GM12878 (cell line): ENCODE measurements at regions of chr2 and their contacts with region 1.

Region 1: DNA sequence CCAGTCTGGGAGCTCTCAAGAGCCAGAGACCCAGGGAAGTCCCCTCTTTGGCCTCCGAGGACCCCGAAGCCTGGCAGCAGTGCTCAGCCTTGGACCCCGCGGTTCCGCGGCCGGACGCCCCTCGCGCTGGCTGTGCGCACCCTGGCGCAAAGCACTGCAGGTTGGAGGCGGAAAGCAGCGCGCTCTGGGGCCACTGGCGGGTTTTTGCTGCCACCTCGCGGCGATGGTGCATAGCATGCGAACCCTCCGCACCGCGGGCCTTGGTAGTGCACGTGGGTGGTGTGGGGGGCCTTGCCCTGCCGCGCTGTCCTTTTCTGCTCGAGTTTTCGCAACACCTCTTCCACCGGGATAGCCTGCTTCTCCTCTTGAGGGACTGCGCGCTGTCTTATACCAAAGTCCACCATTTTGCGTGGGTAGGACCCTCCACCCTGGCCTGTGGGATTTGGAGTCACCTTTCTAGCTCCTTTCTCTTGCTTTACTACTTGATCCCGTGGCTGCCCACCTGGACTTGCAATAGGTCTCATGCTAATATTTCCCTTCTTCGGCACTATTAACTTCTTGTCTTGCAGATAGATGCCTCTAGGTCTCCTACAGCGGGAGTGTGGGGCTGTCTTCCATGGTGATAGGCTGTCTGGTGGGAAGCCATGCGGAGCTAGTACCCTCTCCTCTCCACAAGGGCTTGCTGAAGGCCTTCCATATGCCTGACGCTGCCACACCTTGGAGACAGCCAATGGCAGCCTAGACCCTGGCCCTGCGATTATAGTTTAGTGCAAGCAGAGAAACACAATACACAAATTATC is 14.3 kb downstream of the SIX3 start:
- DNase-seq: no peak
- ATAC-seq: peak; percentile 91
- H3K4me3 ChIP-seq: peak overlapping the region; percentile 57; the same call in 1 of the 2 replicates
- H3K27ac ChIP-seq: no peak overlapping the region
- H3K4me1 ChIP-seq: no peaks in the 10 kb centered on the region; the same call in 1 of the 2 replicates
- H3K27me3 ChIP-seq: peaks cover 6 to 24% of the 10 kb centered on the region in 2 experiments
- CTCF ChIP-seq: peak; percentile 80 to 99 (median 92)
- EP300 ChIP-seq: no peak
- POLR2A ChIP-seq: no peak
- RAD21 ChIP-seq: peak; percentile 91

Region 2: GRCh38 chr2:44244129-44244871 is 711.5 kb before region 1 on chr2:
- CTCF ChIA-PET with region 1: interaction called, 21 read pairs
- POLR2A ChIA-PET with region 1: no interaction called
- RAD21 ChIA-PET with region 1: interaction called, 7 read pairs
- SMC1A ChIA-PET with region 1: interaction called, 9 read pairs
- in situ Hi-C with region 1: loop called (anchors 10 kb)
- intact Hi-C with region 1: loop called (anchors 2 kb)
- DNase-seq: no peak
- ATAC-seq: peak; percentile 85
- H3K4me3 ChIP-seq: no peak overlapping the region
- H3K27ac ChIP-seq: no peak overlapping the region
- H3K4me1 ChIP-seq: no peaks in the 10 kb centered on the region
- H3K27me3 ChIP-seq: no peaks in the 10 kb centered on the region
- CTCF ChIP-seq: peak; percentile 33 to 45 (median 41); a peak in 4 of 6 replicates
- EP300 ChIP-seq: no peak
- POLR2A ChIP-seq: no peak
- RAD21 ChIP-seq: peak; percentile 77

Region 3: GRCh38 chr2:44490726-44491125 is 465.1 kb before region 1 on chr2:
- CTCF ChIA-PET with region 1: interaction called, 10 read pairs
- POLR2A ChIA-PET with region 1: no interaction called
- RAD21 ChIA-PET with region 1: interaction called, 6 read pairs
- SMC1A ChIA-PET with region 1: interaction called, 3 read pairs
- in situ Hi-C with region 1: no loop called
- intact Hi-C with region 1: no loop called
- DNase-seq: no peak
- ATAC-seq: no peak
- H3K4me3 ChIP-seq: no peak overlapping the region
- H3K27ac ChIP-seq: no peak overlapping the region
- H3K4me1 ChIP-seq: no peaks in the 10 kb centered on the region
- H3K27me3 ChIP-seq: no peaks in the 10 kb centered on the region
- CTCF ChIP-seq: no peak
- EP300 ChIP-seq: no peak
- POLR2A ChIP-seq: no peak
- RAD21 ChIP-seq: no peak

Region 4: DNA sequence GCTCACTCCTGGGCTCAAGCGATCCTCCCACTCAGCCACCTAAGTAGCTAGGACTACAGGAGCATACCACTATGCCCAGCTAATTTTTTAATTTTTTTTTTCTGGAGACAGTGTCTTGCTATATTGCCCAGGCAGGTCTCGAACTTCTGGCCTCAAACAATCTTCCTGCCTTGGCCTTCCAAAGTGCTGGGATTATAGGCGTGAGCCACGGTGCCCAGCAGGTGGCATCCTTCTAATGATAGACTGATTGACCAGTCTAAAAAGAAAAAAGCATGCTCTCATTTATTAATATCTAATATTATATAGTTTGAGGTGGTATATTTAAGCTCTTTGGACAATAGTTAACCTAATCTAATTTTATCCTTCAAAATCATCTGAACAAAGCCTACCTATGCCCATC is 395.4 kb before region 1 on chr2:
- CTCF ChIA-PET with region 1: interaction called, 88 read pairs
- POLR2A ChIA-PET with region 1: no interaction called
- RAD21 ChIA-PET with region 1: interaction called, 56 read pairs
- SMC1A ChIA-PET with region 1: interaction called, 42 read pairs
- in situ Hi-C with region 1: loop called (anchors 10 kb)
- intact Hi-C with region 1: loop called (anchors 5 kb)
- DNase-seq: no peak
- ATAC-seq: peak; percentile 57
- H3K4me3 ChIP-seq: no peak overlapping the region
- H3K27ac ChIP-seq: no peak overlapping the region
- H3K4me1 ChIP-seq: no peaks in the 10 kb centered on the region
- H3K27me3 ChIP-seq: no peaks in the 10 kb centered on the region
- CTCF ChIP-seq: peak; percentile 29 to 40 (median 36); a peak in 5 of 6 replicates
- EP300 ChIP-seq: no peak
- POLR2A ChIP-seq: no peak
- RAD21 ChIP-seq: peak; percentile 48

Region 5: GRCh38 chr2:44674473-44675284 is 281.1 kb before region 1 on chr2:
- CTCF ChIA-PET with region 1: interaction called, 76 read pairs
- POLR2A ChIA-PET with region 1: no interaction called
- RAD21 ChIA-PET with region 1: interaction called, 16 read pairs
- SMC1A ChIA-PET with region 1: interaction called, 28 read pairs
- in situ Hi-C with region 1: no loop called
- intact Hi-C with region 1: no loop called
- DNase-seq: no peak
- ATAC-seq: peak; percentile 46; the same call in 2 of the 3 replicates
- H3K4me3 ChIP-seq: no peak overlapping the region
- H3K27ac ChIP-seq: no peak overlapping the region
- H3K4me1 ChIP-seq: no peaks in the 10 kb centered on the region
- H3K27me3 ChIP-seq: no peaks in the 10 kb centered on the region
- CTCF ChIP-seq: no peak
- EP300 ChIP-seq: no peak
- POLR2A ChIP-seq: no peak
- RAD21 ChIP-seq: no peak

Region 6: DNA sequence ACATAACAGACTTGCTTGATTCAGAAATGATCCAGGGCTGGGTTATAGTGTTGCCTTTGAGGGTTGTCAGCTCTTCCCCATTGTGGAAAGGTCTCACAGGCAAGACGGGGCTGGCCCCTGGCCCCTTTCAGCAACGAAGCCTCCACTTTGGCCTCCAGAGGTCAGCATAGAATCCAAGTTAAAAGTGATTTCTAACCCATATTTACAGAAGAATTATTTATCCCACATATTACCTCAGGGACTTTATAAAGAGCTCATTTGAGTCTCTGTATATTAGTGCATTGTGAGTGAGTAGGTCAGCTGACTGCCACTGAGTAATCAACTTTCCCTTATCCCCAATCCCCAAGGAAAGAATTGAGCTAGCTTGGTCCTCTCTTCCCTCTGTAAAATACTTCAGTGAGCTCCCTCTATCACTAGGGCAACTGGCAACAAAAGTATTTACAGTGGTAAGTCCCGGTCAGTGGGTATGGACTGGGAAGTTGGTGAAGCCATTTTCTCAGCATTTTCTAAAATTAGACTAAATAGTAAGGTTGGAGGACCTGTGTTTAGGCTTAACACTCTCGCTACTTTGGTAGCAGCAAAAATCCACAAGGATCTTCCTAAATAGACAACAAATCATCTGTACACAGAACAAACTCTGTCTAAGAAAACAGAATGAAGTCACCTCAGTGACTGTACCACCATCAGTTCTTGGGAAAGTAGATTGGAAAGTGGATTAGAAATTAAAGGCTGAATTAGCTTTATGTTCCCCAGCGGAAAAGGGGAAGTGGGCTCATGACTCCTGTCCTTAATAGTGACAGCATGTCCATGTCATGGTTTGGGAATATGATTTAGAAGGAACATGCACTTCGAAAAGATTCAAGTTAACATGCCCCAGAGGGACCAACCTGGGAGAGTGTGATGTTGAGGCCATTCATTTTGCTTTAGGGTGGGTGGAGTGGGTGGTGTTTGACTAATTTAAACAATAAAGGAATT is 185.3 kb before region 1 on chr2:
- CTCF ChIA-PET with region 1: interaction called, 48 read pairs
- POLR2A ChIA-PET with region 1: no interaction called
- RAD21 ChIA-PET with region 1: interaction called, 25 read pairs
- SMC1A ChIA-PET with region 1: interaction called, 41 read pairs
- in situ Hi-C with region 1: no loop called
- intact Hi-C with region 1: no loop called
- DNase-seq: no peak
- ATAC-seq: peak; percentile 36
- H3K4me3 ChIP-seq: no peak overlapping the region
- H3K27ac ChIP-seq: no peak overlapping the region
- H3K4me1 ChIP-seq: no peaks in the 10 kb centered on the region
- H3K27me3 ChIP-seq: no peaks in the 10 kb centered on the region
- CTCF ChIP-seq: peak in 1 of 3 experiments; percentile 3; a peak in 1 of 6 replicates
- EP300 ChIP-seq: no peak
- POLR2A ChIP-seq: no peak
- RAD21 ChIP-seq: no peak

Region 7: DNA sequence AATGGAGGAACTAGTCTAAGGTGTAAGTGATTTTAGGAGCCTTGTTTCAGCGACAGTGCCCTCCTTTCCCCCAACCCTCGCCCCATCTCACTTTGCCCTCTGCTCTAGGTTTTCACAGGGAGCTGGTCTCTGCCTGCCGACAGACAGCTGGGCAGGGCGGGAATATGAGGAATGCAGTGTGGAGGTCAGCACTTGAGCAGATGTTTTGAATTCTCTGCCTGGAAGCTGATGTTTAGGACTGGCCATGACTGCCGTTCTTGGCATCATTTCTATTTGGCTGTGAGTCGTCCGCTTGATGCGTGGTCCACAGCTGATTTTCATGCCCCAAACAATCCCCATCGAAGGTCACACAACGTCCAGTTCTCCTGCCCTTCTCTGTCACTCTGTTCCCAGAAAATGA is 69.4 kb before region 1 on chr2:
- CTCF ChIA-PET with region 1: no interaction called
- POLR2A ChIA-PET with region 1: no interaction called
- RAD21 ChIA-PET with region 1: no interaction called
- SMC1A ChIA-PET with region 1: no interaction called
- in situ Hi-C with region 1: no loop called
- intact Hi-C with region 1: no loop called
- DNase-seq: no peak
- ATAC-seq: no peak
- H3K4me3 ChIP-seq: no peak overlapping the region
- H3K27ac ChIP-seq: no peak overlapping the region
- H3K4me1 ChIP-seq: no peaks in the 10 kb centered on the region
- H3K27me3 ChIP-seq: no peaks in the 10 kb centered on the region; a peak in 1 of 4 replicates
- CTCF ChIP-seq: no peak
- EP300 ChIP-seq: no peak
- POLR2A ChIP-seq: no peak
- RAD21 ChIP-seq: no peak

Region 8: GRCh38 chr2:45009303-45009927 is 53.6 kb after region 1 on chr2 and contains the start of gene SIX2:
- CTCF ChIA-PET with region 1: no interaction called
- POLR2A ChIA-PET with region 1: no interaction called
- RAD21 ChIA-PET with region 1: no interaction called
- SMC1A ChIA-PET with region 1: no interaction called
- in situ Hi-C with region 1: no loop called
- intact Hi-C with region 1: no loop called
- DNase-seq: no peak
- ATAC-seq: no peak
- H3K4me3 ChIP-seq: no peak within 1 kb of the TSS
- H3K27ac ChIP-seq: no peak within 1 kb of the TSS
- H3K4me1 ChIP-seq: no peaks in the 10 kb centered on the region
- H3K27me3 ChIP-seq: peaks cover 33 to 49% of the 10 kb centered on the region in 2 experiments
- CTCF ChIP-seq: no peak
- EP300 ChIP-seq: no peak
- POLR2A ChIP-seq: no peak
- RAD21 ChIP-seq: no peak
- polyA plus RNA-seq, gene SIX2: not detected

Region 9: GRCh38 chr2:45028268-45028667 is 72.5 kb after region 1 on chr2:
- CTCF ChIA-PET with region 1: no interaction called
- POLR2A ChIA-PET with region 1: no interaction called
- RAD21 ChIA-PET with region 1: no interaction called
- SMC1A ChIA-PET with region 1: no interaction called
- in situ Hi-C with region 1: no loop called
- intact Hi-C with region 1: no loop called
- DNase-seq: no peak
- ATAC-seq: no peak
- H3K4me3 ChIP-seq: no peak overlapping the region
- H3K27ac ChIP-seq: no peak overlapping the region
- H3K4me1 ChIP-seq: no peaks in the 10 kb centered on the region
- H3K27me3 ChIP-seq: no peaks in the 10 kb centered on the region; a peak in 2 of 4 replicates
- CTCF ChIP-seq: no peak
- EP300 ChIP-seq: no peak
- POLR2A ChIP-seq: no peak
- RAD21 ChIP-seq: no peak

Region 10: DNA sequence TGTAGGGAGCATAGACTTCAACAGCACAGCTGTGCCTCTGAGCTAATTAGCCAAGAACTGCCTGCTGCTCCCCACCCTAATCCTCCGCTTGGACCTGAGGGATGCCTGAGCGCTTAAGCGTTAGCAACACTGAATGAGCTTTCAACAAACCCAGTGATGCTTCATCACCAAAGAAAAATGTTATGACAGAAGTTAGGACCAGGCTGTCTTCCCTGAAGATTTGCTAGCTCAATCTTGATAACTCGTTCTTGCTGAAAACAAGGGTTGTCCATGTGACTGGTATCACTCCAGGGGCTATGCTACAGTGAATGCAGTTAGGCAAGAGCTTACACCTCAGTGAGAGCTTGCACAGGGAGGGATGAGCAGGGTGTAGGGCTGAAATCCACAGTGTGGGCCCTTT is 244.2 kb after region 1 on chr2:
- CTCF ChIA-PET with region 1: no interaction called
- POLR2A ChIA-PET with region 1: no interaction called
- RAD21 ChIA-PET with region 1: no interaction called
- SMC1A ChIA-PET with region 1: no interaction called
- in situ Hi-C with region 1: no loop called
- intact Hi-C with region 1: no loop called
- DNase-seq: no peak
- ATAC-seq: no peak
- H3K4me3 ChIP-seq: no peak overlapping the region
- H3K27ac ChIP-seq: no peak overlapping the region
- H3K4me1 ChIP-seq: no peaks in the 10 kb centered on the region
- H3K27me3 ChIP-seq: no peaks in the 10 kb centered on the region; a peak in 1 of 4 replicates
- CTCF ChIP-seq: no peak
- EP300 ChIP-seq: no peak
- POLR2A ChIP-seq: no peak
- RAD21 ChIP-seq: no peak